ENCODE measurements at regions of chr6 and their contacts with region 1.

Region 1: DNA sequence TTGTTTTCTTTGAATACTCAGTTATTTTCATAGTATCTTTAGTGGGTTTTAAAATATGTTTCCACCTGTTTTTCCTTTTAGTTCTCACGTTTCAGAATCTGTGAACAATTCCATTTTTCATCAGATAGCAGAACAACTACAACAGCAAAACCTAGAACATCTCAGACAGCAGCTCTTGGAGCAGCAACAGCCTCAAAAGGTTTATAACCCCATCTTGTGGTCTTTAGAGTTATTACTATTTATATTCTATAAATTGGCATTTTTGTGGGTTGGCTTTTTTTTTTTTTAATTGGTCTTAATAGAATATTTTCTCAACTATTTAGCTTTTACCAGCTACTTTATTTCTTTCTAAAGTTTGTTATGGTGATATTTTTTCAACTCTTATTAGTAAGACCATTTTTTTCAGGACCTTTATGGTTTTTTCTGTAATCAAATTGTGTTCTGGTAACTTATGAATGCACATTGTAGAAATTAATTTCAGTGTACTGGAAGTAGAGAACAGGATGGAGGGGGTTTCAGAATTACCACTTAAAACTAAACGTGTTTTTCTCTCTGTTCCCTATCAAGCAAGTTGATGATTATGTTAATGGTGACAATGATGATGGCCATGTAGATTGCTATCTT is 72.2 kb downstream of the SCAF8 start:
- DNase-seq: no peak
- ATAC-seq: no peak
- H3K4me3 ChIP-seq: no peak overlapping the region
- H3K27ac ChIP-seq: no peak overlapping the region
- H3K4me1 ChIP-seq: no peaks in the 10 kb centered on the region
- H3K27me3 ChIP-seq: no peaks in the 10 kb centered on the region
- CTCF ChIP-seq: peak; percentile 52; the same call in 1 of the 2 replicates

Region 2: GRCh38 chr6:154675602-154676088 is 129.8 kb before region 1 on chr6:
- CTCF ChIA-PET with region 1: interaction called, 9 read pairs
- POLR2A ChIA-PET with region 1: interaction called, 3 read pairs
- in situ Hi-C with region 1: no loop called
- intact Hi-C with region 1: loop called (anchors 1 kb)
- DNase-seq: peak; percentile 98
- ATAC-seq: peak; percentile 99
- H3K4me3 ChIP-seq: no peak overlapping the region
- H3K27ac ChIP-seq: no peak overlapping the region
- H3K4me1 ChIP-seq: no peaks in the 10 kb centered on the region
- H3K27me3 ChIP-seq: no peaks in the 10 kb centered on the region
- CTCF ChIP-seq: peak; percentile 99

Region 3: DNA sequence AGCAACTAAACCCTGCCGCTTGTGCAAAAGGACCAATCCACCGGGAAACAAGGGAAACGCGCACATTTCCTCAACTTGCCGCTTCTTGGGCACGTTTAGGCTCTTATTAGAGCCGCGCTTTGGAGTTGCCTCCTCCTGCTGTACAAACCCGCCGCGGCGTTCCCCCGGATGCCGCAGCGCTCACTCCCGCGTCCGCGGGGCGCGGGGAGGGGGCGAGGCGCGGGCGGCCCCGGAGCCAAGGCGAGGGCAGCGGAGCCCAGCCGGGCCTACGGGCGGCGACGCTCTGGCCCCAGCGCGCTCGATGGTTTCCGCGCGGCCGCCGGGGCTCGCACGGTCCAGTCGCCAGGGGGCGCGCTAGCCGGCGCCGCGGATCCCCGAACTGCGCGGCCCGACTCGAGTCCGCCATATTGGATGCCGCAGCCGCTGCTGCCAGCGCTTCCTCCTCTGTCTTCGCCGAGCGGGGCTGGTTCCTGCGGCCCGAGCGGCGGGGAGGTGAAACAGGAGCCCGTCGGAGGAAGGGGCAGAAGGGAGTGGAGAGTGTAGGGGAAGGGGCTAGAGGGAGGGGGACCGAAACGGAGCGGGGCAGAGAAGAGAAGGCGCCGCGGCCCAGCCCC is 72.3 kb before region 1 on chr6 and contains the start of gene SCAF8:
- CTCF ChIA-PET with region 1: no interaction called
- POLR2A ChIA-PET with region 1: no interaction called
- in situ Hi-C with region 1: no loop called
- intact Hi-C with region 1: loop called (anchors 2 kb)
- DNase-seq: no peak
- ATAC-seq: peak; percentile 87
- H3K4me3 ChIP-seq: peak within 1 kb of the TSS; percentile 81 to 82
- H3K27ac ChIP-seq: peak within 1 kb of the TSS; percentile 97
- H3K4me1 ChIP-seq: peaks cover 26% of the 10 kb centered on the region
- H3K27me3 ChIP-seq: no peaks in the 10 kb centered on the region
- CTCF ChIP-seq: peak; percentile 98
- total RNA-seq, gene SCAF8: 38.9 TPM

Region 4: DNA sequence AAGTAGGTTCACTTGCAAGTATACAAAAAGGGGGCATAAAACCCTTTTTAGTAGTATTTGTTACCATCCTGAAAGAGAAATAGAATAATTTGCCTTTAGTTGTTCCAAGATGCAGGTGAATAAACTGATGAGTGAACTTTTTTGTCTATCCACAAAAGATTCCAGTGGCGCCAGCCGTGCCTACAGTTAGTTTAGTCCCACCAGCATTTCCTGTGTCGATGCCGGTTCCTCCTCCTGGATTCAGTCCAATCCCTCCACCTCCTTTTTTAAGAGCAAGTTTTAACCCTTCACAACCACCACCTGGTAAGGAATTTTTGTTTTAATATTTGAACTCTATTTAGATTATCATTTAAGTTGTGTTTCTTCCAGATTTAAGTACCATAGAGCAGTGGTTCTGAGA is 18.7 kb after region 1 on chr6:
- CTCF ChIA-PET with region 1: no interaction called
- POLR2A ChIA-PET with region 1: interaction called, 11 read pairs
- in situ Hi-C with region 1: no loop called
- intact Hi-C with region 1: no loop called
- DNase-seq: no peak
- ATAC-seq: no peak
- H3K4me3 ChIP-seq: no peak overlapping the region
- H3K27ac ChIP-seq: no peak overlapping the region
- H3K4me1 ChIP-seq: no peaks in the 10 kb centered on the region
- H3K27me3 ChIP-seq: no peaks in the 10 kb centered on the region
- CTCF ChIP-seq: no peak

Region 5: GRCh38 chr6:154888426-154889295 is 83.3 kb after region 1 on chr6:
- CTCF ChIA-PET with region 1: no interaction called
- POLR2A ChIA-PET with region 1: no interaction called
- in situ Hi-C with region 1: no loop called
- intact Hi-C with region 1: no loop called
- DNase-seq: no peak
- ATAC-seq: no peak
- H3K4me3 ChIP-seq: no peak overlapping the region
- H3K27ac ChIP-seq: no peak overlapping the region
- H3K4me1 ChIP-seq: 0 out of 2 replicates have a peak, but pooled peaks cover 5% of the 10 kb centered on the region
- H3K27me3 ChIP-seq: no peaks in the 10 kb centered on the region
- CTCF ChIP-seq: no peak

Measured in Panc1 (cell line).